Left ventricle myocardium superior (tissue), 1 donor: ENCODE measurements at regions of chr19 and their contacts with region 1.

Region 1: DNA sequence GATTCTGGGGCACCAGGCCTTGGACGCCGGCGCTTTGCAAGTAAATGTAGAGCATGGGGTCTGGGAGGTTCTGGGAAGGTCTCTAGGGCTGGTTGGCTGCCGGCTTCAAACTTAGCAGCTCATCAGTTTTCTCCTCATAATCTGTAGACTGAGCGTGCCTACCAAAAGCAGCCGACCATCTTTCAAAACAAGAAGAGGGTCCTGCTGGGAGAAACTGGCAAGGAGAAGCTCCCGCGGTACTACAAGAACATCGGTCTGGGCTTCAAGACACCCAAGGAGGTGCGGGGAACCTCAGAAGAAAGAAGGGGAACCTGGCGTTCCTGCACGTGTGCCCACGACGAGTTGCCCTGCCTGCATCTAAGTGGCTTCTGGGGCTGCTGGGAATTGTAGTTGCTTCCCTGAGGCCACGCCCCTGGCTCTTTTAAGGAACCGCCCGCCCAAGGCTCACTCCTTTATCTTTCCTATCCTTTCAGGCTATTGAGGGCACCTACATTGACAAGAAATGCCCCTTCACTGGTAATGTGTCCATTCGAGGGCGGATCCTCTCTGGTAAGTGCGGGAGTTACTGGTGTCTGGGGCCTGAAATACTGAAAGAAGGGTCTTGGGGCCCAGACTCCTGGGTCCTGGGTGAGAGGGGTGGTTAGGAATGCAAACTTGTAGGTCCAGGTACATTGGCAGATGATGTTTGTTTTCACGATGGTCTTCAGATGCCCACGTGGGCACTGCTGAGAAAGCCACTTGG is 984 bp downstream of the RPS11 start:
- DNase-seq: peak; percentile 68
- ATAC-seq: peak; percentile 2

Region 2: GRCh38 chr19:49453757-49454240 is 43.4 kb before region 1 on chr19:
- intact Hi-C with region 1: no loop called
- DNase-seq: no peak
- ATAC-seq: no peak

Region 3: GRCh38 chr19:49570138-49570856 is 73.1 kb after region 1 on chr19:
- intact Hi-C with region 1: loop called (anchors 2 kb)
- DNase-seq: peak; percentile 44
- ATAC-seq: peak; percentile 77

Region 4: GRCh38 chr19:49580264-49581006 is 83.2 kb after region 1 on chr19 and contains the start of gene NOSIP:
- intact Hi-C with region 1: no loop called
- DNase-seq: peak; percentile 95
- ATAC-seq: peak; percentile 98
- total RNA-seq, gene NOSIP: 46.7 TPM